Ovary (tissue), 10 donors: ENCODE measurements at regions of chr11 and their contacts with region 1.

Region 1: DNA sequence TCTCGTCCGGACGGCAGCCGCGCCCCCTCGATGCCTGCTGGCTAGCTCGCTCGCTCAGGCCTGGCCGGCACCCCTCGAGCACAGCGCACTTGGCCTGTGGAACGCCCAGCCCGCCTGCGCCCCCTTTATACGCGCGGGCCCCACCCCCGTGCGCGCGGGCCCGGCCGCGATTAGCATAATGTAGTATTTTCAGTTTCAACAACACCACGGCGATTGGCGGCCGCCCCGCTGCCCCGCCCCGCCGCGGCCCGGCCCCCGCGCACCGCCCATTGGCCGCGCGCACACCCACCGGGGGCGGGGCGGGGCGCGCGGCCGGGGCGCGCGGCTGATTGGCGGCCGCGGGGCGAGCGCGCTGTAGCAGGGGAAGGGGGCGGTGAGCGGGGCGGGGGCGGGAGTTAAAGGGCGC is at the start of gene CDKN1C:
- DNase-seq: peak; percentile 94 to 97 (median 96)
- H3K4me3 ChIP-seq: peak within 1 kb of the TSS; percentile 75
- H3K27ac ChIP-seq: peak within 1 kb of the TSS; percentile 95 to 96
- H3K4me1 ChIP-seq: peaks cover 7% of the 10 kb centered on the region
- H3K27me3 ChIP-seq: no peaks in the 10 kb centered on the region
- CTCF ChIP-seq: peak in 1 of 3 donors; percentile 12
- EP300 ChIP-seq: no peak
- POLR2A ChIP-seq: peak; percentile 98
- total RNA-seq, gene CDKN1C: 158 to 363 (median 236) TPM

Region 2: GRCh38 chr11:2532704-2533586 is 352.7 kb before region 1 on chr11:
- intact Hi-C with region 1: loop called (anchors 1 to 2 kb)
- DNase-seq: peak; percentile 92 to 97 (median 96)
- H3K4me3 ChIP-seq: peak overlapping the region; percentile 14
- H3K27ac ChIP-seq: peak overlapping the region in 1 of 2 donors; percentile 39
- H3K4me1 ChIP-seq: peaks cover 7% of the 10 kb centered on the region
- H3K27me3 ChIP-seq: no peaks in the 10 kb centered on the region
- CTCF ChIP-seq: peak; percentile 98 to 99 (median 99)
- EP300 ChIP-seq: no peak
- POLR2A ChIP-seq: peak; percentile 42

Region 3: GRCh38 chr11:2689651-2690575 is 195.8 kb before region 1 on chr11:
- intact Hi-C with region 1: loop called in 1 of 4 experiments (anchors 10 kb)
- DNase-seq: peak in 3 of 5 donors; percentile 7 to 16 (median 11)
- H3K4me3 ChIP-seq: no peak overlapping the region
- H3K27ac ChIP-seq: peak overlapping the region in 1 of 2 donors; percentile 83
- H3K4me1 ChIP-seq: peaks cover 47% of the 10 kb centered on the region
- H3K27me3 ChIP-seq: no peaks in the 10 kb centered on the region
- CTCF ChIP-seq: no peak
- EP300 ChIP-seq: no peak
- POLR2A ChIP-seq: no peak

Region 4: GRCh38 chr11:2699531-2700414 is 185.9 kb before region 1 on chr11 and contains the start of gene KCNQ1OT1:
- intact Hi-C with region 1: loop called in 1 of 4 experiments (anchors 2 kb)
- DNase-seq: peak; percentile 89 to 92 (median 91)
- H3K4me3 ChIP-seq: peak within 1 kb of the TSS; percentile 81
- H3K27ac ChIP-seq: peak within 1 kb of the TSS; percentile 67 to 80
- H3K4me1 ChIP-seq: peaks cover 6% of the 10 kb centered on the region
- H3K27me3 ChIP-seq: no peaks in the 10 kb centered on the region
- CTCF ChIP-seq: no peak
- EP300 ChIP-seq: no peak
- POLR2A ChIP-seq: peak; percentile 90
- total RNA-seq, gene KCNQ1OT1: 3.9 to 11.5 (median 6.8) TPM

Region 5: DNA sequence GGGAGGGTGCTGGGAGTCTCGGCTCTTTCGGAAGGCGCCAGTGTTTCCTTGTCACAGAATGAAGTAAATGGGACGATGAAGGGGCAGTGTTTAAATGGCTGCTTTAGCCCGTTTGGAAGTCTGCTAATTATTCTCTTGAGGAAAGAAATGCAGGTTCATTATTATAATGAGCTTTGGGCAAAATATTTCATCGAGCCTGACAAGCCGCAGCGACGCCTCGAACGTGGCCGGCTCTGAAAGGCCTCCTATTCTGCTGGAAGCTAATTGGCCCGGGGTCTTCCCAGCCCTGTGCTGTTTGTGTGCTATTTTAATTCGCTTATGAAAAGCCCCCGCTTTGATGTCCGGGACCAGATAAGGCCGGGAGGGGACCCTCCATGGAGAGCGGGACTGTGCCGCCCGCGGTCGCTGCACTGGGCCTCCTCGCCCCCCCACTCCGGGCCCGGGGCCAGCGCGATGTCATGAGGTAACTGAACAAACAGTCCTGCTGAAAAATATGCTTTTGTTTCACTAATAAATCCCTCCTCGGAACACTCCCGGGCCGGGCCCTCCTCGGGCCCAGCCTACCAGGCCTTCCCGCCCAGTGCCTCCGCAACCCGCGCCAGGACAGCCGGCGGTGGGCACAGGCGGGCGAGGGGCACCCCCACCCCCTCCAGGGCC is 78.5 kb before region 1 on chr11:
- intact Hi-C with region 1: loop called in 1 of 4 experiments (anchors 5 kb)
- DNase-seq: peak; percentile 89 to 94 (median 91)
- H3K4me3 ChIP-seq: no peak overlapping the region
- H3K27ac ChIP-seq: peak overlapping the region; percentile 81 to 86
- H3K4me1 ChIP-seq: peaks cover 32% of the 10 kb centered on the region
- H3K27me3 ChIP-seq: no peaks in the 10 kb centered on the region
- CTCF ChIP-seq: no peak
- EP300 ChIP-seq: no peak
- POLR2A ChIP-seq: no peak

Region 6: DNA sequence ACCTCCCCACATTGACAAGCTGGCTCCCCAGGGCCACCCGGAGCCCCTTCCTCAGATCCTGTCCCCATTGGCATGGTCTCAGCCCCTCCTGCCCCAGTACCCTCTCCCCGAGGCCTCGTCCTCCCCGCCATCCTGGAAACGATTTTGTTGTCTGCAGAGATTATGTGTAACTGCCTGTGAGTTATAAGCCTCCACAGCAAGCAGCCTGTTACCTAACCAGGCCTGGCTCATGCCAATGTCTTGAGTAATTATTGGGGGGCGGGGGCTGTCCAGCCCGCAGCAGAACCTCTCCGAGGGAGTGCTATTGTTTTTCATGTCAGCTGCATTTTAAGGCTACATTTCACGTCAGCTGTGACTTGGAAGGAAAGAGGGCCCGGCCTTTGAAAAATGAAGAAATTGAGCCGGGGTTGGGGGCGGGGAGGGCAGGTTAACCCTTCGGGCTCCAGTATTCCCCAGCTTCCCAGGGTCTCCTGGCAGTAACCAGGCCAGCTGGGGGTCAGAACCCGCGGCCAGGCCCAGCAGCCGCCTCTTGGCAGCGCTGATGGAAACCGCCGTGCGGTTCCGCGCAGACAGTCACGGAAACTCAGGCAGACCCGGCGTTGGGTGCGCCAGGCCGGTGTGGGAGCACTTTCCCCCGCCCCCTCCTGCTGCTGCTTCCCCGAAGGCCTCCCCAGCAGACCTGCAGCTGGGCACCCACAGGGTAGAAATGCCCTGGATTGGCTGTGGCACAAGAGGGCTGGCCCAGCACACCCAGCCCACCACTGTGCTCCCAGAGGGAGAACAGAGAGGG is 59.6 kb before region 1 on chr11:
- intact Hi-C with region 1: loop called in 2 of 4 experiments (anchors 2 to 5 kb)
- DNase-seq: peak; percentile 86 to 92 (median 87)
- H3K4me3 ChIP-seq: peak overlapping the region; percentile 16
- H3K27ac ChIP-seq: peak overlapping the region; percentile 61 to 90
- H3K4me1 ChIP-seq: peaks cover 18% of the 10 kb centered on the region
- H3K27me3 ChIP-seq: no peaks in the 10 kb centered on the region
- CTCF ChIP-seq: no peak
- EP300 ChIP-seq: no peak
- POLR2A ChIP-seq: peak; percentile 38